ENCODE measurements at regions of chr7 and their contacts with region 1.

Region 1: GRCh38 chr7:108497082-108497725 is 28.7 kb downstream of the PNPLA8 start:
- DNase-seq: peak in 2 of 5 donors; percentile 12 to 22
- ATAC-seq: peak in 2 of 4 donors; percentile 52 to 61
- H3K4me3 ChIP-seq: no peak overlapping the region
- H3K27ac ChIP-seq: no peak overlapping the region
- H3K4me1 ChIP-seq: no peaks in the 10 kb centered on the region
- H3K27me3 ChIP-seq: no peaks in the 10 kb centered on the region
- CTCF ChIP-seq: peak; percentile 71 to 94 (median 82)
- POLR2A ChIP-seq: no peak

Region 2: GRCh38 chr7:108189733-108190388 is 307.3 kb before region 1 on chr7:
- intact Hi-C with region 1: loop called in 1 of 10 experiments (anchors 5 kb)
- DNase-seq: no peak
- ATAC-seq: no peak
- H3K4me3 ChIP-seq: no peak overlapping the region
- H3K27ac ChIP-seq: no peak overlapping the region
- H3K4me1 ChIP-seq: no peaks in the 10 kb centered on the region
- H3K27me3 ChIP-seq: peaks cover 0 to 5% (median 0%) of the 10 kb centered on the region in 9 donors
- CTCF ChIP-seq: no peak
- POLR2A ChIP-seq: no peak

Region 3: GRCh38 chr7:108246227-108246837 is 250.9 kb before region 1 on chr7:
- intact Hi-C with region 1: no loop called
- DNase-seq: no peak
- ATAC-seq: peak in 3 of 4 donors; percentile 42 to 69 (median 68)
- H3K4me3 ChIP-seq: no peak overlapping the region
- H3K27ac ChIP-seq: no peak overlapping the region
- H3K4me1 ChIP-seq: peaks cover 0 to 3% (median 0%) of the 10 kb centered on the region in 12 donors
- H3K27me3 ChIP-seq: no peaks in the 10 kb centered on the region
- CTCF ChIP-seq: no peak
- POLR2A ChIP-seq: no peak

Region 4: GRCh38 chr7:108459931-108460551 is 37.2 kb before region 1 on chr7:
- intact Hi-C with region 1: no loop called
- DNase-seq: no peak
- ATAC-seq: peak in 1 of 4 donors; percentile 28
- H3K4me3 ChIP-seq: no peak overlapping the region
- H3K27ac ChIP-seq: no peak overlapping the region
- H3K4me1 ChIP-seq: peaks cover 0 to 19% (median 10%) of the 10 kb centered on the region in 12 donors
- H3K27me3 ChIP-seq: peaks cover 0 to 46% (median 20%) of the 10 kb centered on the region in 9 donors
- CTCF ChIP-seq: peak in 7 of 12 donors; percentile 21 to 51 (median 39)
- POLR2A ChIP-seq: no peak

Measured in heart left ventricle (tissue), 16 donors.